ENCODE measurements at regions of chr16 and their contacts with region 1.

Region 1: GRCh38 chr16:57447186-57447962 is at the starts of genes CIAPIN1 and COQ9:
- DNase-seq: peak; percentile 96
- ATAC-seq: peak; percentile 99
- H3K4me3 Mint-ChIP-seq: peak within 1 kb of the TSS; percentile 93
- H3K27ac Mint-ChIP-seq: peak within 1 kb of the TSS; percentile 92
- H3K4me1 Mint-ChIP-seq: peaks cover 30% of the 10 kb centered on the region
- H3K27me3 Mint-ChIP-seq: no peaks in the 10 kb centered on the region
- total RNA-seq, gene CIAPIN1: 47.8 to 53.8 TPM
- total RNA-seq, gene COQ9: 38.2 to 40.4 TPM

Region 2: GRCh38 chr16:57277586-57277985 is 169.8 kb before region 1 on chr16:
- CTCF ChIA-PET with region 1: no interaction called
- POLR2A ChIA-PET with region 1: no interaction called
- DNase-seq: peak; percentile 79
- ATAC-seq: peak; percentile 91
- H3K4me3 Mint-ChIP-seq: peak overlapping the region; percentile 53
- H3K27ac Mint-ChIP-seq: peak overlapping the region; percentile 69
- H3K4me1 Mint-ChIP-seq: peaks cover 35% of the 10 kb centered on the region
- H3K27me3 Mint-ChIP-seq: peaks cover 12% of the 10 kb centered on the region

Region 3: DNA sequence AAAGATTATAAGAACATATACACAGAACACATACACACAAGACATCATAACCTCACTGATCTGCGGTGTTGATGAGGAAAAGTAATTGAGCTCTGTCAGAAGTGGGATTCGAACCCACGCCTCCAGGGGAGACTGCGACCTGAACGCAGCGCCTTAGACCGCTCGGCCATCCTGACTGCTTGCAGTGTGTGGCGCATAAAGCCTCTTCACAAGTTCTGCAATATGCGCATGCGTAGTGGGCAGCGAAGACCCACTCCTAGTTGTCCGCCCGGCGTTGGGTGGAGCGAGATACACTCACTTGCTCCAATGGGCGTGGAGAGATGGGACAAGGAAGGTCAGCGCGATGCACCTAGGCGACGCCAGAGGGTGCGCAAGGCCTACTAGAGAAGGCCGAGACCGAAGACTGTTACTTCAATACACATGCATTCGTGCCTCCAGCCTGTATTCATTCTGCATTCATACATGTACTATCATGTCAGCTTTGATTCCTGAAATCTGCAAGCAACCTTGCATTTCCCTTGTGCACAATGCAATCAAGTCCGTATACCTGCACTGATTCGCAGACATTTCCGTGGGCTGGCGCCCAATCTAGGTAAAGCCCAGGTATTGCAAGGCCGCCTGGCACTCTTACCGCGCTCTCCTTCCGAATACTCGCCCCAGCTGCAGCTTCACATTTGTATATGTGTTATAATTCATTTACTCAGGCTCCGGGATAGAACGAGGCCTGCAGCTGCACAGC is 146.8 kb before region 1 on chr16:
- CTCF ChIA-PET with region 1: interaction called, 12 read pairs
- POLR2A ChIA-PET with region 1: interaction called, 3 read pairs
- DNase-seq: peak; percentile 99
- ATAC-seq: peak; percentile 91
- H3K4me3 Mint-ChIP-seq: no peak overlapping the region
- H3K27ac Mint-ChIP-seq: no peak overlapping the region
- H3K4me1 Mint-ChIP-seq: peaks cover 41% of the 10 kb centered on the region
- H3K27me3 Mint-ChIP-seq: peaks cover 5% of the 10 kb centered on the region

Region 4: DNA sequence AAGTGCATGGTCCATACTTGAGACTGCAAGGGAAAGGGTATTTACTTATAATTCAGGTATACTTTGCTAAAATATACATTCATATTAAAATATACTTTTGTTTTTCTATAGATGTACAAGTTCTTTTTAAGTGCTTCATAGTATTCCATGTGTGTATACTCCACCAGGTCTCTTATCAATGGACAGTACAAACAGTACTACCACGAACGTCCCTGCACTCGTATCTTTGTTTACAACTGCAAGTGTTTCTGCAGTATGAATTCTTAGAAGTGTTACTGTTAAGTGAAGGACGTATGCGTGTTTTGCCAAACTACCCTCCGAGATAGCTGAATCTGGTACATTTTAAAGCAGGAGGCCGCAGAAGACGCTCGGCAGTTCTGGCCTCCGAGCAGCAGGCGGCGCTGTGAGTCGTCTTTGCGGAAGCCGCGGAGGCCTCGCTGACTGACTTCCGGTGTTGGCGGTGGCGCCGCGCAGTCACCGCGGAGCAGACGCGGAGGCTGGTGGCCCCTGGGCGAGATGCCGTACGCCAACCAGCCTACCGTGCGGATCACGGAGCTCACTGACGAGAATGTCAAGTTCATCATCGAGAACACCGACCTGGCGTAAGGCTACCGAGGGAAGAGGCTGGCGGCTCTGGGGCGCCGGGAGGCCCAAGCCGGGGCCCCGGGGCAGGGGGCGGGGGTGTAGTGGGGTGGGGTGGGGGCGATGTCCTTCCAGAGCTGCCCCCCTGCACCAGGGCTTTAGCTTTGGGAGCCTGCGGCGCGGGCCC is 15.0 kb after region 1 on chr16 and contains the start of gene POLR2C:
- CTCF ChIA-PET with region 1: interaction called, 38 read pairs
- POLR2A ChIA-PET with region 1: interaction called, 20 read pairs
- DNase-seq: peak; percentile 95
- ATAC-seq: peak; percentile 97
- H3K4me3 Mint-ChIP-seq: peak within 1 kb of the TSS; percentile 100
- H3K27ac Mint-ChIP-seq: peak within 1 kb of the TSS; percentile 100
- H3K4me1 Mint-ChIP-seq: peaks cover 29% of the 10 kb centered on the region
- H3K27me3 Mint-ChIP-seq: no peaks in the 10 kb centered on the region
- total RNA-seq, gene POLR2C: 57.0 to 58.3 TPM

Region 5: DNA sequence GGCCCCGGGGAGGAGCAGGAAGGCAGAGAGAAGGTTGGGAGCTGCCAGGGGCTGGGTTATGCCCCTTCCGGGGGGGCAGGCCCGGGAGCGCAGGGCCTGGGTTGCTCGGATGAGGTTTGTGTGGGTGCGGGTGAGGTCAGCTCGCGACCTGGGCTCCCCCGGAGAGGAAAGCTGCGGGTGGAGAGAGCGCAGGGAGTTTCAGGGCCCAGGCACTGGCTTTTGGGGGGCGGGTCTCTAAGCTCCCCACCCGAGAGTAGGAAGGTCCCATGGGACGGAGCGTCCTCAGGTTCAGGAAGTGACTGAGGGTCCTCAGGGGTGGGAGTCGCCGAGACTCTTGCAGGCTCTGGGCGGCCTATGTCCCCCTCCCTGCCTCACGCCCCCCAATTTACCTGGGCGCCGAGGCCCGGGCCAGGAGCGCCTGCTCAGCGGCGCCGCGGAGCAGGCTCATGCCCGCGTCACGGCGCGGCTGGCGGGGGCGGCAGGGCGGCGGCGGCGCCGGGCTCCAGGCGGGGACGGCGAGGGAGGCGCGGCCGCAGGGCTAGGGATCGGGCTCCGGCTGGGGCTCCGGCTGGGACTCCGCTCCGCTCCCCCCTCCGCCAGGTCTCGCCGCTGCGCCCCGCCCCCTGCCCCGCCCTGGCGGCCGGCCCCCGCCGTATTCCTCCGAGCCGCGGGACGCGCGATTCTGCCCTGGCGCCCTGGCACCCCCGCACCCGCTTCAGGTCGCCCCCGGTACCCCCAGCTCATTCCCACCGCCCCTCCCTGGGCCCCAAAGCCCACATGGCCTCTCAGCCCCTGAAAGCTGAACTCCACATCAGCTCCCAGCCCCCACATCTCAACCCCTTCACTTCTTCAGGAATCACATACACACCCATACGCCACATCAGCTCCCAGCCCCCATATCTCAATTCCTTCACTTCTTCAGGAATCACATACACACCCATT is 38.8 kb after region 1 on chr16 and contains the start of gene DOK4:
- CTCF ChIA-PET with region 1: interaction called, 3 read pairs
- POLR2A ChIA-PET with region 1: interaction called, 10 read pairs
- DNase-seq: peak; percentile 82
- ATAC-seq: peak; percentile 99
- H3K4me3 Mint-ChIP-seq: peak within 1 kb of the TSS; percentile 76
- H3K27ac Mint-ChIP-seq: peak within 1 kb of the TSS; percentile 76
- H3K4me1 Mint-ChIP-seq: peaks cover 19% of the 10 kb centered on the region
- H3K27me3 Mint-ChIP-seq: peaks cover 5% of the 10 kb centered on the region
- total RNA-seq, gene DOK4: 4.8 to 6.4 TPM

Measured in activated CD8-positive, alpha-beta T cell treated with anti-CD3 and anti-CD28 coated beads, Interleukin-2, amount 10 ng/mL, durations not matched to agents 7 days and 5 days (primary cell).